OCI-LY7 (cell line): ENCODE measurements at regions of chr12 and their contacts with region 1.

Region 1: DNA sequence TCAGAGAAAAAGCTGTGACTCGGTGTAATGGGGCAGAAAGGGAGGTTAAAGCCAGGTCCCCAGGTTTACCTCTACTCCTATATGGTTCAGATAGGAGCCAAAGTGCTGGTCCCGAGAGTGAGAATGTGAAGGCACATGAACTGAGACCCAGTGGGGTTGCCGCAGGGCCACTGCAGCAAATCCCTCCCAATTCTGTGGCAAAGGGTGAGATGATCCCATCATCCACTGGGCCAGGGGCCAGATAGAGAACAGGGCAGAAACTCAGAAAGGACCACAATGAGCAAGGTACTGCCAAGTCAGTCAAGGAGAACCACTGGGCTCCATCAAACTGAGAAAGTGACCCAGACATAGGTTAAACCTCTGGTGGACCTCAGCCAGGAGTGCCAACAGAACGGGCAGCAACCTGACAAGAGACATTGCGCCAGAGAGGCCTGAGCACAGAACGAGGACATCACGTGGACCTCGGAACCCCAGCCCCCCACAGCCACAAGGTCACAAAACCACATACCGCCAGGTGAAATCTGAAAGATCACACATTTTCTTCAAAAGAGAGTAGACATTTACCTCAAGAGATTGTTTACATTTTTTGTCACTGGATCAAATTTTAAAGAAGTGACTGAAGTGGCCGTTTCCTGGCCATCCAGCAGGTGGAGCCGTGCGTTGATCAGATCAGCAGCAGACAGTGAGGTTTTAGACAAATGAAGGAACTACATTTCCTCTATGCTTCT is 20.5 kb upstream of the ITPR2 start:
- DNase-seq: peak; percentile 84
- H3K4me3 ChIP-seq: peak overlapping the region; percentile 7
- H3K27ac ChIP-seq: no peak overlapping the region
- H3K4me1 ChIP-seq: peaks cover 23% of the 10 kb centered on the region
- CTCF ChIP-seq: peak; percentile 99

Region 2: DNA sequence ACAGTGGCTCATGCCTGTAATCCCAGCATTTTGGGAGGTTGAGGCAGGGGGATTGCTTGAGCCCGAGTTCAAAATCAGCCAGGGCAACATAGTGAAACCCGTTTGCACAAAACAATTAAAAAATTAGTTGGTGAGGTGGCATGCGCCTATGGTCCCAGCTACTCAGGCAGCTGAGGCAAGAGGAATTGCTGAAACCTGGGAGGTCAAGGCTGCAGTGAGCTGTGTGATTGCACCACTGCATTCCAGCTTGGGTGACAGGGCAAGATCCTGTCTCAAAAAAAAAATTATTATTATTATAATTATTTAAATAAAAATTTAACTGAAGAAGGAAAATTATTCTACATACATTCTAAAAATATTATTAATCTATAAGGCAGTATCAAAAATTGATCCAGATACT is 184.6 kb before region 1 on chr12:
- CTCF ChIA-PET with region 1: no interaction called
- POLR2A ChIA-PET with region 1: no interaction called
- intact Hi-C with region 1: no loop called
- DNase-seq: no peak
- H3K4me3 ChIP-seq: no peak overlapping the region
- H3K27ac ChIP-seq: no peak overlapping the region
- H3K4me1 ChIP-seq: no peaks in the 10 kb centered on the region
- CTCF ChIP-seq: no peak

Region 3: DNA sequence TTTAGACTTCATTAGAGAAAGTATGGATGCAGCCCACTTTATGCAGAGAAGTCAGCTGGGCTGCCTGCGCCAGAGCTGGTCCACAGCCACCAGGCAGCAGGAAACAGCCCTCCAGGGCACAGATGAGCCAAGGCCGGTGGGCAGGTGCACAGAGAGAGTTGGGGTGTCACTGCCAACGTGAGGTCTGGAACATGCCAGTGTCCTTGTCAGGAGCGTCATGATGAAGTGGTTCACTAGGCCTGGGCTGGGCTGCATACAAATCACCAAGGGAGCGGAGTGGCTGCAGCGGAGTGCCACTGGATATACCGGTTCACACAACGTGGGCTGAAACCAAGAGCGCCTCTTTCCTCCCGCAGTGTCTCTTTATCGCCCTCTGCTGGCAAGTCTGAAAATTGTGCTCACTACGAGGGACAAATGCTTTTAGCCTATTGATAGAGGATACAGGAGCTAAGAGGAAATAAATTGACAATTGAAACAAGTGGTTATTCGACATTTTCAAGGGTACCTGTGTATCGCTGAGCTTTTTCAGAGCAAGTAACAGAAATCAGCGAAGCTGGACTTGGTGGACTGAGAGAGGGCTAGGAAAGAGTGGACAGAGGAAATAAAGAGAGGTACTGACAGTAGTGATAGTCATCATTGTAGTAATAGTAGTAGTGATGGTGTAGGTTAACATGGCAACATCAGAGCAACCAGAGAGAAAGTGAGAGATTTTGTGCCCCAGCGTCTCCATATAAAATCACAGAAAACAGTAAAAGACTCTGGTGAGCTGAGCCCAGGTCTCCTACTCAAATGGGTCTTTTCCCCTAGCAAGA is 31.5 kb after region 1 on chr12:
- CTCF ChIA-PET with region 1: interaction called, 3 read pairs
- POLR2A ChIA-PET with region 1: interaction called, 3 read pairs
- intact Hi-C with region 1: loop called (anchors 1 kb)
- DNase-seq: peak; percentile 81
- H3K4me3 ChIP-seq: no peak overlapping the region
- H3K27ac ChIP-seq: no peak overlapping the region
- H3K4me1 ChIP-seq: no peaks in the 10 kb centered on the region
- CTCF ChIP-seq: peak; percentile 98